Aorta (tissue), 5 donors: ENCODE measurements at regions of chr20 and their contacts with region 1.

Region 1: GRCh38 chr20:10679269-10679668 is 5.5 kb upstream of the JAG1 start:
- DNase-seq: no peak
- ATAC-seq: no peak
- H3K4me3 ChIP-seq: no peak overlapping the region
- H3K27ac ChIP-seq: no peak overlapping the region
- H3K4me1 ChIP-seq: peaks cover 0 to 2% of the 10 kb centered on the region in 2 donors
- H3K27me3 ChIP-seq: no peaks in the 10 kb centered on the region

Region 2: DNA sequence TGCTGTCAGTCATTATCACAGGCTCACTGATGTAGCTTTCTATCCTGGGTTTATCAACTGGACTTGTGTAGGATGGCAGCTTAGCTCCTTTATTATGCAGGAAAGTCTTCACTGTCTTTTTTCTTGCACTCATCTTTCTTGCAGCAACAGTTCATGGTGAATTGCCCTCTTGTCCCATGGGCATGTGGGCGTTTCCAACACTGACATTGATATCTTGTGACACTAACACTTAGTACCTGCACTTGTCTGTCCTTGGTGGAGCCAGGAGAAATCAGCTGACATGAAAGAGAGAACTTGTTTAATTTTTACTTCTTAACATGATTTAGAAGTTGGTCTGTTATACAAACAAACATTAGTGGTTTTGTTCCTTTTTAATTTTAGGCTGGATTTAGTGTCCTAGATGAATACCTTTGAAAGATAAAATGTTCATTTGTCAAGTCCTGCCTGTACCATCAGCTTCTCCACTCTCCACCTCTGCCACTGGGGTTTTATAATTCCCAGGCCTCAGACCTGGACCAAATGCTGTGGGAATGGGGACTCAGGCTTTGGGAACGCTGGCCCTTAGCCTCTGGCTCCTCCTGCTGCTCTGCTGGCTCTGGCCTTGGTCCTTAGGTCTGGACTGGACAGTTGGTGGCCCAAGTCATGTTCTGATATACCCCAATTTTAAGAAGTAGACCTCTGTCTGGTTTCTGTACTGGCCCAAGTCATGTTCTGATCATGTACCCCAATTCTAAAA is 1325.9 kb before region 1 on chr20:
- intact Hi-C with region 1: no loop called
- DNase-seq: no peak
- ATAC-seq: peak; percentile 41
- H3K4me3 ChIP-seq: no peak overlapping the region
- H3K27ac ChIP-seq: no peak overlapping the region
- H3K4me1 ChIP-seq: no peaks in the 10 kb centered on the region
- H3K27me3 ChIP-seq: no peaks in the 10 kb centered on the region

Region 3: DNA sequence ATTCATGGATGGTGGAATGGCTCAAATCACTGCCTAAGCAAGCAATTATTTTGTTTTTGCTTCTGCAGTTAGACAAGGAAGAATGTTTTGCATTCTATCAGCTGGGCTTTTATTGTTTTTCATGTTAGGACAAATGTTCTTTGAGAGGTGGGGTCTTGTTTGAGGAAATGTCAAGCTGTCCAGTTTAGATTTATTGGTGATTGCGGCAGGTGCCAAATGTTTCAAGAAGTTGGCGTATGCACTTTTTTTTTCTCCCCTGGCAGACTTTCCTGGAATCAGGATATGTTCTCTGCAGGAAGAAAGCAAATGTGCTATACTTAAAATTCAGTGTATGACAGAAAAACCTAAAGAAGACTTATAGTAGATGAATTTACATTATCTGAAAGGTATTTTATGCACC is 75.6 kb after region 1 on chr20:
- intact Hi-C with region 1: loop called in 1 of 2 experiments (anchors 2 kb)
- DNase-seq: no peak
- ATAC-seq: no peak
- H3K4me3 ChIP-seq: no peak overlapping the region
- H3K27ac ChIP-seq: no peak overlapping the region
- H3K4me1 ChIP-seq: peaks cover 0 to 7% of the 10 kb centered on the region in 2 donors
- H3K27me3 ChIP-seq: no peaks in the 10 kb centered on the region